AG04450 (cell line): ENCODE measurements at regions of chr17 and their contacts with region 1.

Region 1: GRCh38 chr17:35660902-35661301 is 70.5 kb upstream of the RASL10B start:
- DNase-seq: no peak
- H3K4me3 ChIP-seq: no peak overlapping the region
- H3K27ac ChIP-seq: no peak overlapping the region
- H3K27me3 ChIP-seq: no peaks in the 10 kb centered on the region
- CTCF ChIP-seq: no peak

Region 2: GRCh38 chr17:35645923-35646322 is 15.0 kb before region 1 on chr17:
- CTCF ChIA-PET with region 1: interaction called, 12 read pairs
- POLR2A ChIA-PET with region 1: no interaction called
- DNase-seq: no peak
- H3K4me3 ChIP-seq: no peak overlapping the region
- H3K27ac ChIP-seq: no peak overlapping the region
- H3K27me3 ChIP-seq: no peaks in the 10 kb centered on the region
- CTCF ChIP-seq: no peak

Region 3: DNA sequence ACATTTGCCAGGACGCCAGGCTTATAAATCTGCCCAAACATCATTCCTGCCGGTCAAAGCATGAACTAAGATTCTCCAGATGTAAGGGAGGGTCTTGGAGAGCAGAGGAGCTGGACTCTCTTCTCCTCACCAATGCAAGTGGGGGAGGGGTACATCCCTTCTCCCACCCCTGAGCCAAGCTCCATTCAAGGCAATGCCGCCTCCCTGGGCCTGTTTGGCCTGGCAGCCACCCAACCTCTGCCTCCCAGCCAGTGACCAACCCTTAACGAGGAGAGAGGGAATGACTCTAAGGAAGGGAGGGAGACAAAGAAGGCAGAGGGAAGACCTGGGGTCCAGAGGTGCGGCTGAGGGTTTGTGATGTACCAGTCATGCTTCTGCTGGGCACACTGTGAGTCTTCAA is 113.6 kb after region 1 on chr17:
- CTCF ChIA-PET with region 1: no interaction called
- POLR2A ChIA-PET with region 1: no interaction called
- DNase-seq: no peak
- H3K4me3 ChIP-seq: no peak overlapping the region
- H3K27ac ChIP-seq: no peak overlapping the region
- H3K27me3 ChIP-seq: peaks cover 19% of the 10 kb centered on the region
- CTCF ChIP-seq: no peak